ENCODE measurements at regions of chr12 and their contacts with region 1.

Region 1: DNA sequence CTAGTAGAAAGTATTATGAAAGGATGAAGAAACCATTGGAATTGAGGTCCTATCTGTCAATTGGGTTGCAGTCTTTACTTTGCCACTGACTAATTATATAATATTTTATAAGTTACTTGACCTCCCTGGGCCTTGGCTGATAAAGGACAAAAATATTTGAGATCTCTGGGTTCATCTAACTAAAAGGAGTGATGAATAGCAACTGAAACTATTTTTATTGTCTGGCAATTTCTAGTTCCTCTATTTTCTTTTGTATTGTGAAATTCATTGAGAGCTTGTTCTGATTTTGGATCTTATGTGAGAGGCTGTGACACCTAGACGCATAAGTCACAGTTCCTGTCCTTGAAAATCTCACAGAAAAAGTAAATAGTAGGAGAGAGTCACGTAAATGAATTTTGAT is 415.7 kb upstream of the ATP2B1 start:
- DNase-seq: peak; percentile 67
- ATAC-seq: peak; percentile 61
- H3K4me3 ChIP-seq: no peak overlapping the region
- H3K27ac ChIP-seq: no peak overlapping the region
- H3K4me1 ChIP-seq: peaks cover 25% of the 10 kb centered on the region
- H3K27me3 ChIP-seq: no peaks in the 10 kb centered on the region
- CTCF ChIP-seq: no peak

Region 2: GRCh38 chr12:90076851-90077319 is 47.4 kb before region 1 on chr12:
- CTCF ChIA-PET with region 1: no interaction called
- POLR2A ChIA-PET with region 1: no interaction called
- intact Hi-C with region 1: no loop called
- DNase-seq: no peak
- ATAC-seq: no peak
- H3K4me3 ChIP-seq: no peak overlapping the region
- H3K27ac ChIP-seq: no peak overlapping the region
- H3K4me1 ChIP-seq: peaks cover 5% of the 10 kb centered on the region; the same call in 1 of the 2 replicates
- H3K27me3 ChIP-seq: no peaks in the 10 kb centered on the region
- CTCF ChIP-seq: no peak

Region 3: GRCh38 chr12:90245391-90245790 is 121.1 kb after region 1 on chr12:
- CTCF ChIA-PET with region 1: no interaction called
- POLR2A ChIA-PET with region 1: no interaction called
- intact Hi-C with region 1: loop called (anchors 10 kb)
- DNase-seq: no peak
- ATAC-seq: no peak
- H3K4me3 ChIP-seq: no peak overlapping the region
- H3K27ac ChIP-seq: no peak overlapping the region
- H3K4me1 ChIP-seq: peaks cover 23% of the 10 kb centered on the region
- H3K27me3 ChIP-seq: no peaks in the 10 kb centered on the region
- CTCF ChIP-seq: no peak

Region 4: DNA sequence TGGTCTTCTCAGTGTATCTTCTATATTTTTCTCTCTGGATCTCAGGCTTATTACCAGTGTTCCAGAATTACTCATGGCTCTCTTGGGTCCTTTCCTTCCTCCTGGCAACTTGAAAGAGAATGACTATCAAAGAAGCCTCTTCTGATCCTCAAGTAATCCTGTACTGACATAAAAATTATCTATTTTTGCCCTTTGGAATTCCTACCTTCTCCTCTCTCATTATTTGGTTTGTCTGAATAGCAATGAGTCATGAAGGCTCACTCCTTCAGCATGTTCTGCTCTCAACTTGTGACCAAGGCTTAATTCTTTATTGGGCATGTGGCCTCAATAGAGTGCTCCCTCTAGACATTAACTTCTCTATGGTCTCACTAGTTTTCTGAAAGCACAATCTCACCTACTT is 138.0 kb after region 1 on chr12:
- CTCF ChIA-PET with region 1: no interaction called
- POLR2A ChIA-PET with region 1: no interaction called
- intact Hi-C with region 1: no loop called
- DNase-seq: peak; percentile 61
- ATAC-seq: peak; percentile 74
- H3K4me3 ChIP-seq: no peak overlapping the region
- H3K27ac ChIP-seq: no peak overlapping the region
- H3K4me1 ChIP-seq: peaks cover 8% of the 10 kb centered on the region
- H3K27me3 ChIP-seq: no peaks in the 10 kb centered on the region
- CTCF ChIP-seq: no peak

Region 5: GRCh38 chr12:90460681-90461080 is 336.4 kb after region 1 on chr12:
- CTCF ChIA-PET with region 1: no interaction called
- POLR2A ChIA-PET with region 1: no interaction called
- intact Hi-C with region 1: no loop called
- DNase-seq: no peak
- ATAC-seq: no peak
- H3K4me3 ChIP-seq: no peak overlapping the region
- H3K27ac ChIP-seq: no peak overlapping the region
- H3K4me1 ChIP-seq: no peaks in the 10 kb centered on the region
- H3K27me3 ChIP-seq: no peaks in the 10 kb centered on the region
- CTCF ChIP-seq: no peak

Measured in PC-3 (cell line).